Transverse colon (tissue), 4 donors: ENCODE measurements at regions of chr12 and their contacts with region 1.

Region 1: GRCh38 chr12:124767066-124767821 is 96.4 kb downstream of the SCARB1 start:
- DNase-seq: peak; percentile 83
- H3K4me3 ChIP-seq: no peak overlapping the region
- H3K27ac ChIP-seq: peak overlapping the region; percentile 80 to 83 (median 82)
- H3K4me1 ChIP-seq: peaks cover 5 to 36% (median 26%) of the 10 kb centered on the region in 4 donors
- H3K27me3 ChIP-seq: no peaks in the 10 kb centered on the region
- CTCF ChIP-seq: peak; percentile 97 to 100 (median 100)
- EP300 ChIP-seq: no peak
- POLR2A ChIP-seq: no peak

Region 2: GRCh38 chr12:124036674-124037109 is 730.6 kb before region 1 on chr12:
- in situ Hi-C with region 1: loop called in 3 of 4 experiments (anchors 10 kb)
- intact Hi-C with region 1: loop called (anchors 5 kb)
- DNase-seq: peak; percentile 35
- H3K4me3 ChIP-seq: no peak overlapping the region
- H3K27ac ChIP-seq: no peak overlapping the region
- H3K4me1 ChIP-seq: no peaks in the 10 kb centered on the region
- H3K27me3 ChIP-seq: no peaks in the 10 kb centered on the region
- CTCF ChIP-seq: peak; percentile 87 to 93 (median 88)
- EP300 ChIP-seq: no peak
- POLR2A ChIP-seq: no peak

Region 3: DNA sequence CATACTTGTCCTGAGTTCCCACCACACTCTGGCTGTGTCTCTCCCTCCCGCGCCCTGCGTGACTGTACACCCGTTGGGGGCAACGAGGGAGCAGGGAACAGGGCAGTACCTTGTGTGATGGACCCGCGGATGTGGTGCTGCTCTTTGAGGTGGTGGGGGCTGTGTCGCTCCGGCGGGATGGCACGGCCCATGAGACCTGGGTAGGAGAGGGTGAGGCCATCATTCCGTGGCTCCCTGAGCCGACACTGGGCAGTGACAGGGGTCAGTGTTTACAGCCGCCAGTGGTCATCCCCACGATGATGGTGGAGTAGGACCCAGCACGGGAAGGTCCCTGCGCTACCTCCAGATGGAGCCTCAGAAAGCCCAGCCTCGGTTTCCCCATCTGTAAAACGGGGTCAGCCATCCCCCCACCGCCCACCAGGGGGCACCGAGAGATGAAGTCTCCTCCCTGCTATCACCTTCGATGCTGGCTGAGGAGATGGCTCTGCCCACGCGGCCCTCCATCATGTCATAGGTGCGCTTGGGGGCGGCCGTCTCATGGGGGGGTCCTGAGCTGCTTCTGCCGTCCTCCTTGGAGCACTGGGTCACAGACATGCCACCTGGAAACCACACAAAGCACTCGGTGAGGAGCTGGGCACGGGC is 419.4 kb before region 1 on chr12:
- in situ Hi-C with region 1: loop called in 2 of 4 experiments (anchors 25 kb)
- intact Hi-C with region 1: loop called (anchors 10 kb)
- DNase-seq: no peak
- H3K4me3 ChIP-seq: no peak overlapping the region
- H3K27ac ChIP-seq: no peak overlapping the region
- H3K4me1 ChIP-seq: peaks cover 4 to 8% (median 6%) of the 10 kb centered on the region in 4 donors
- H3K27me3 ChIP-seq: no peaks in the 10 kb centered on the region
- CTCF ChIP-seq: peak; percentile 46 to 53 (median 52)
- EP300 ChIP-seq: no peak
- POLR2A ChIP-seq: no peak

Region 4: DNA sequence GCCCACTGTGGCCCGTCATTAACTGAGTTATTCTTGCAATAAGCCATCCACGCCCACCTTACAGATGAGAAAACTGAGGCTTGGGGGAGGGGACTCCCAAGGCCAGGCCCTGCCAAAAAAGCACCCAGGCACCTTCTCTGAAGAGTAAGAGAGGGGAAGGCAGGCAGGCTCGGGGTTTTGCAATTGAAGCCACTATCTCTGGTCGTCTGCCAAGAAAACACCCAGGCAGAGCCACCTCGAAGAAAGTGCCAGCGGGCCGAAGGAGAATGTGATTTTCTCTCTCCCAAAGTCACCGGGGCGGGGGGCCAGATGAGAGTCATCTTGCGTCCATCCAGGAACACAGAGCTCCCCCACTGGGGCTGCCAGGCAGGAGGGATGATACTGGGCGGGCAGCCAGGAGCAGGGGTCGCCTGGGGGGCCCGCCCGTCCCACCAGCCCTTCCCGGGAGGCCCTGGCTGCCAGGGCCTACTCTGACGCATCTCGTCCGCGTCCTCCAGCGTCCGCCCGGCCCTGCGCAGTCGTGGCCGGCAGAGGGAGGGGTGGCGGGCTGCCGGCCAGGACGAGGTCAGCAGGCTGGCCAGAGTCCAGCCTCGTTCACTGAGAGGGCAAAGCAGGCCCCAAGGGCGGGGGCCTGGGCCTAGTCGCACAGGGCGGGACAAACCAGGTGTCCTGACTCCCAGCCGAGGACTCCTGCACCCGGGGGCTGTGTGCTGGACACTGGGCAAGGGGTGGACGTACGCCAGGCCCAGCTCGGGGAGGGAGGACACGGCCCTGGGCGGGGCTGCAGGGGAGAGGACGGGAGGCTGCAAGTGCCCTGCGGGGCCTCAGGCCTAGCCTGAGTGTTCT is 398.0 kb before region 1 on chr12:
- in situ Hi-C with region 1: loop called in 1 of 4 experiments (anchors 25 kb)
- intact Hi-C with region 1: no loop called
- DNase-seq: peak; percentile 86
- H3K4me3 ChIP-seq: no peak overlapping the region
- H3K27ac ChIP-seq: peak overlapping the region; percentile 84 to 91 (median 89)
- H3K4me1 ChIP-seq: peaks cover 34 to 40% (median 38%) of the 10 kb centered on the region in 4 donors
- H3K27me3 ChIP-seq: no peaks in the 10 kb centered on the region
- CTCF ChIP-seq: peak; percentile 38 to 78 (median 48)
- EP300 ChIP-seq: peak; percentile 35
- POLR2A ChIP-seq: no peak

Region 5: DNA sequence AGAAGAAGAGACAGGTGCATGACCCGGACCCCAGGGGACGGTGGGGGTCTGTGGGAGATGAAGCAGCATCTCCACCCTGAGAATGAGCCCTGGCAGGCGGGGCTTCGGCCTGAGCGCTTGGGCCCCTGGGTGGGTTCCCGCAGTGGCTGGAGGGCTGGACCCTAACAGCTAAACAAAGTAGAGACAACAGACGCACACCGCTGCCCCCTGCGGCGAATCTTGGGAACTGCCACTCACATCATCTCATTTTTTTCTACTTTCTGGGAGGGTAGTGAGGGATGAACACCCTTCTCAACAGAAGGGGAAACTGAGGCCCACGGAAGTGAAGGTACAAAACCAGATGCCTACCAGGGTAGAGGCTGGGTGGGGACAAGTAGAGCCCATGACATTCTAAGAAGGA is 367.6 kb before region 1 on chr12:
- in situ Hi-C with region 1: loop called in 2 of 4 experiments (anchors 25 kb)
- intact Hi-C with region 1: no loop called
- DNase-seq: peak; percentile 42
- H3K4me3 ChIP-seq: no peak overlapping the region
- H3K27ac ChIP-seq: peak overlapping the region; percentile 87 to 92 (median 91)
- H3K4me1 ChIP-seq: peaks cover 46 to 76% (median 64%) of the 10 kb centered on the region in 4 donors
- H3K27me3 ChIP-seq: no peaks in the 10 kb centered on the region
- CTCF ChIP-seq: peak; percentile 63 to 75 (median 71)
- EP300 ChIP-seq: no peak
- POLR2A ChIP-seq: no peak

Region 6: GRCh38 chr12:124578445-124578844 is 188.8 kb before region 1 on chr12:
- in situ Hi-C with region 1: loop called in 2 of 4 experiments (anchors 10 to 25 kb)
- intact Hi-C with region 1: no loop called
- DNase-seq: no peak
- H3K4me3 ChIP-seq: no peak overlapping the region
- H3K27ac ChIP-seq: no peak overlapping the region
- H3K4me1 ChIP-seq: peaks cover 0 to 5% (median 3%) of the 10 kb centered on the region in 4 donors
- H3K27me3 ChIP-seq: no peaks in the 10 kb centered on the region
- CTCF ChIP-seq: no peak
- EP300 ChIP-seq: no peak
- POLR2A ChIP-seq: no peak

Region 7: DNA sequence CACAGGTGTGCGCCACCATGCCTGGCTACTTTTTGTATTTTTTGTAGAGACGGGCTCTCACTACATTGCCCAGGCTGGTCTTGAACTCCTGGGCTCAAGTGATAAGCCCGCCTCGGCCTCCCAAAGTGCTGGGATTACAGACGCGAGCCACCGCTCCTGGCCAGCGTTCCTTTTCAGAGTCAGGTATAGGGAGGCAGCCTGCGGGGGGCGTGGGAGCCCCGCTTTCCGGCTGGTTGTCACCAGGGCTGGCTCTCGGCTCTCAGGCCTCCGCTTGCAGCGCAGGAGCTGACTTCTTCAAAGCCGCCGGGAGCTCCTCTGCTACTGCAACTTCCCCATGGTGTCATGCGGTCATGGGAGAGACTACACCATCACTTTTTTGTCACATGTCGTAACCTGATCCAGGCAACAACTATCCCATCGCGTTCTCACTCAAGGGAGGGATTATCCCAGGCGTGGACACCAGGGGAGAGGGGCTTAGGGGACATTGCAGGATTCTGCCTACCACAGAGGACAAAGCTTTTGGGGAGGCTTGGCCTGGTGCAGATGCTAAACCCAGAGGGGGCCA is 32.9 kb before region 1 on chr12:
- in situ Hi-C with region 1: no loop called
- intact Hi-C with region 1: no loop called
- DNase-seq: no peak
- H3K4me3 ChIP-seq: no peak overlapping the region
- H3K27ac ChIP-seq: peak overlapping the region; percentile 26 to 44 (median 36)
- H3K4me1 ChIP-seq: peaks cover 0 to 17% (median 6%) of the 10 kb centered on the region in 4 donors
- H3K27me3 ChIP-seq: no peaks in the 10 kb centered on the region
- CTCF ChIP-seq: no peak
- EP300 ChIP-seq: no peak
- POLR2A ChIP-seq: no peak